ENCODE measurements at regions of chr2 and their contacts with region 1.

Region 1: DNA sequence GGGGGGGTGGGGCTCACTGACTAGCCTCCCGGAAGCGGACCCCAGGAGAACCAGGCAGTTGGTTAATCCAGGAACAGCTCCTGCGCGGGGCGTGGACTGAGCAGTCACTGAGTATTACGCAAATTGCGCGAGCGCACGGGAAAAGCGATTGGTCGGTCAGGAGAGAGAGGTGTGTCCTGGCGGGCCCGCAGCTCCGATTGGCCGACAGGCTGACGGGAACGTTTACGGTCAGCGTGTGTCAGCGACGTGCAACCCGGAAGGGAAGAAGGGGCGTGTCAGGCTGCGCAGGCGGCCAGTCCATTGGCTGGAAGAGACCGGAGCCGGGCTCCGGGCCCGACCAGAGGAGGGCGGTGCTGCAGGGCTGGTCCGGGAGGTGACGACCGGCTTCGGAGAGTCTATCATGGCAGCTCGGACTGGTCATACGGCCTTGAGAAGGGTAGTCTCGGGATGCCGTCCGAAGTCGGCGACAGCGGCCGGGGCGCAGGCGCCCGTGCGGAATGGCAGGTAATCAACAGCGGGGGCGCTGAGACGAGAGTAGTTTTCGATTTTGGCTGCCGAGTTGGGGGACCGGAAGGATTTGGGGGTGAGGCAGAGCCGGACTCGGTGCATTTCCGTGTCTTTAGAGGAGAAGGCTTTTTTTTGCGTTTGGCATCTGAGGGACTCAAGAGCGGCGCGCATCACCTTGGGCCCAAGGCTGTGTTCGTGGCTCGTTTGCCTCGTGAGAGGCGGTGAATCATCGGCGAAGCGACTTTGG is at the start of gene COQ10B:
- DNase-seq: peak; percentile 91
- ATAC-seq: peak; percentile 88
- H3K4me3 Mint-ChIP-seq: peak within 1 kb of the TSS; percentile 91
- H3K27ac Mint-ChIP-seq: peak within 1 kb of the TSS; percentile 94
- H3K4me1 Mint-ChIP-seq: peaks cover 45% of the 10 kb centered on the region
- H3K27me3 Mint-ChIP-seq: no peaks in the 10 kb centered on the region
- CTCF ChIP-seq: no peak
- total RNA-seq, gene COQ10B: 25.1 and 27.5 TPM in 2 replicates

Region 2: GRCh38 chr2:196639180-196640030 is 813.9 kb before region 1 on chr2 and contains the start of gene CCDC150:
- CTCF ChIA-PET with region 1: no interaction called
- POLR2A ChIA-PET with region 1: no interaction called
- intact Hi-C with region 1: loop called (anchors 1 kb)
- DNase-seq: peak; percentile 90
- ATAC-seq: peak; percentile 100
- H3K4me3 Mint-ChIP-seq: peak within 1 kb of the TSS; percentile 89
- H3K27ac Mint-ChIP-seq: peak within 1 kb of the TSS; percentile 53
- H3K4me1 Mint-ChIP-seq: peaks cover 14% of the 10 kb centered on the region
- H3K27me3 Mint-ChIP-seq: no peaks in the 10 kb centered on the region
- CTCF ChIP-seq: no peak
- total RNA-seq, gene CCDC150: 2.3 and 2.6 TPM in 2 replicates

Region 3: DNA sequence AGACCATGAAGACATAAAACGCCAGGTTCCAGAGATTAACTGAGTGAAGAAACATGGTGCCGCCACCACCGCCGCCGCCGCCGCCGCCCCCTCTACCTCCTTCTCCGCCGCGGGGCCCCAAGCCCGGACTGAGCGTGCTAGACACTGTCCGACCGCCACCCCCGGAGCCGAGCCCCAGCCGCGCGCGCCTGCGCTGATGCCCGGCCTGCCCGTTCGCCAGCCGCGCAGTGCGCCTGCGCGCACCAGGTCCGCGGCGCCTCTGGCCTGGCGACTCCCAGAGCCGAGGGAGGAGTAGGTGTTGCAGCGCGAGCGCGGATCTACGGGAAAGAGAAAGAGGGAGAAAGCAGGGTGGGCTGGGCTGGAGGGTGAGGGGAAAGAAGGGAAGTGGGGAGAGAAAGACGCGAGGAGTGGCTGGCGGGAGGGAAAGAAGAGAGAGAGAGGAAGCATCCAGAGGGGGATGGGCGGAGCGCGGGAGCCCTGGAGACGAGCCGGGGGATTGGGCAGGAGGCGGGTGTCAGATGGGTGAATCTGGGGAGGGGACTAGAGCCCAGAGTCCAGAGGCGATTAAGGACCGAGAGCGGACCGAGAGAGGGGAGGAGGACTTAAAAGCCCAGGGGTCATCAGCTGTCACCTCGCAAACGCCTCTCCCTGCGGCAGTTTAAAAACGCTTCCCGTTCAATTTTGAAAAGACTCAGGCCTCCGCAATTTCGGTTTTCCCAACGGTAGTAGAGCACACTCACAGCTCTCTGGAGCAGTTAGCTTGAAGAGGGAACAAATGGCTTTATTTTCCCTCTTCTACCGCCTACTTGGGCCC is 526.6 kb before region 1 on chr2 and contains the start of gene PGAP1:
- CTCF ChIA-PET with region 1: no interaction called
- POLR2A ChIA-PET with region 1: no interaction called
- intact Hi-C with region 1: loop called (anchors 1 kb)
- DNase-seq: peak; percentile 82
- ATAC-seq: peak; percentile 91
- H3K4me3 Mint-ChIP-seq: peak within 1 kb of the TSS; percentile 90
- H3K27ac Mint-ChIP-seq: peak within 1 kb of the TSS; percentile 86
- H3K4me1 Mint-ChIP-seq: peaks cover 21% of the 10 kb centered on the region
- H3K27me3 Mint-ChIP-seq: peaks cover 13% of the 10 kb centered on the region
- CTCF ChIP-seq: no peak
- total RNA-seq, gene PGAP1: 1.9 and 2.9 TPM in 2 replicates

Region 4: DNA sequence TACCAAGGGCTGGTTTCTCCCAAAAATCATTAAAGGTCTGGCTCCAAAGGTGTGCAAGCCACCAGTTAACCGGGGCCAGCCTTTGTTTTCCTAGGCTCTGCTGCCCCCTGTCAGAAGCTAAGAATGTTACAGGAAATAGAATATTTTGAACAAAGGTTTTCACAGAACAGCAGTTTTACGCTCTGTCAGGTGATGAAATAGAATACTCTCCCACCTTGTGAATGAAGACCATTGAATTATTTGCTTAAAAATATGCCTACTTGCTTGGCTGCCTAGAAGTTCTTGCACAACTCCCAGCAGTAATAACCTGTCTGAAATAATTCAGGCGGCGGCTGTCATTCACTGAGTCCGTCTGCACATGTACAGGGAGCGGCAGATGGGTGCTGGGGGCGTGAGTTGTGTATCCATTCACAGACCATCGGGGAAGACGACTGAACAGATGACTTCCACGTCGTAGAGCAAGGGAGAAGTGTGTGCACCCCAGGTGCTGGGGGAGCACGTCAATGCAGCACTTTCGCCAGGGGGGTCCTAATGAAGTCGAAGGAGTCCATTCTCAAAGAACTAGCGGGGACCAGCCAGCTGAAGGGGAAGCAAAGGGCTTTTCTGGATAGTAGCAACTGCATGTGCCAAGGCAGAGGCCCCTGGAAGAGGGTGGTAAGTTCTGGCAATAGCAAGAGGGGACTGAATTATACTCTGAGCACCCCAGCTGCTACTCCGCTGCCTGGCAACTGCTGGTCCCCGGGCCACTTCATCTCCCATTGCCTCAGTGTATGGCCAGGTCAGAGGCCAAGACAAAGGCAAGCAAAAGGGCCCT is 74.6 kb before region 1 on chr2:
- CTCF ChIA-PET with region 1: no interaction called
- POLR2A ChIA-PET with region 1: no interaction called
- intact Hi-C with region 1: no loop called
- DNase-seq: peak; percentile 29
- ATAC-seq: peak; percentile 66
- H3K4me3 Mint-ChIP-seq: no peak overlapping the region
- H3K27ac Mint-ChIP-seq: no peak overlapping the region
- H3K4me1 Mint-ChIP-seq: peaks cover 11% of the 10 kb centered on the region
- H3K27me3 Mint-ChIP-seq: no peaks in the 10 kb centered on the region
- CTCF ChIP-seq: peak; percentile 43

Region 5: DNA sequence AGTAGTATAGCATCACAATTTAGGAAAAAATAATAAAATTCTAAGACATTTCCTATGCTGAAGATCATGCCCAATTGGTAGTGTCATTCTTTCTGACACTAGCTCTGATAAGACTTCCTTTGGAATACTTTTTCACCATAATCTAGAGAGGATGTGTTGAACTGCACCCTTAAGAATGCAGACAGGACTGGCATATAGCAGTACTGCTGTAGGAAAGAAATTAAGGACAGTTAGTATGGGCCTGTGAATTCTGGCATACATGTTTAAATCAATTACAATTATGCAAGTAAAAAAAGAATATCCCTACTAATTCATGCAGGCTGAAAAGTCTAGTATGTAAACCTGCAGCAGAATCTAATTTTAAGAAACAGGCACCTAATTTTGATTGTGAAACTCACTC is 33.9 kb before region 1 on chr2:
- CTCF ChIA-PET with region 1: no interaction called
- POLR2A ChIA-PET with region 1: no interaction called
- intact Hi-C with region 1: loop called (anchors 1 kb)
- DNase-seq: no peak
- ATAC-seq: no peak
- H3K4me3 Mint-ChIP-seq: no peak overlapping the region
- H3K27ac Mint-ChIP-seq: no peak overlapping the region
- H3K4me1 Mint-ChIP-seq: peaks cover 10% of the 10 kb centered on the region
- H3K27me3 Mint-ChIP-seq: no peaks in the 10 kb centered on the region
- CTCF ChIP-seq: no peak

Region 6: DNA sequence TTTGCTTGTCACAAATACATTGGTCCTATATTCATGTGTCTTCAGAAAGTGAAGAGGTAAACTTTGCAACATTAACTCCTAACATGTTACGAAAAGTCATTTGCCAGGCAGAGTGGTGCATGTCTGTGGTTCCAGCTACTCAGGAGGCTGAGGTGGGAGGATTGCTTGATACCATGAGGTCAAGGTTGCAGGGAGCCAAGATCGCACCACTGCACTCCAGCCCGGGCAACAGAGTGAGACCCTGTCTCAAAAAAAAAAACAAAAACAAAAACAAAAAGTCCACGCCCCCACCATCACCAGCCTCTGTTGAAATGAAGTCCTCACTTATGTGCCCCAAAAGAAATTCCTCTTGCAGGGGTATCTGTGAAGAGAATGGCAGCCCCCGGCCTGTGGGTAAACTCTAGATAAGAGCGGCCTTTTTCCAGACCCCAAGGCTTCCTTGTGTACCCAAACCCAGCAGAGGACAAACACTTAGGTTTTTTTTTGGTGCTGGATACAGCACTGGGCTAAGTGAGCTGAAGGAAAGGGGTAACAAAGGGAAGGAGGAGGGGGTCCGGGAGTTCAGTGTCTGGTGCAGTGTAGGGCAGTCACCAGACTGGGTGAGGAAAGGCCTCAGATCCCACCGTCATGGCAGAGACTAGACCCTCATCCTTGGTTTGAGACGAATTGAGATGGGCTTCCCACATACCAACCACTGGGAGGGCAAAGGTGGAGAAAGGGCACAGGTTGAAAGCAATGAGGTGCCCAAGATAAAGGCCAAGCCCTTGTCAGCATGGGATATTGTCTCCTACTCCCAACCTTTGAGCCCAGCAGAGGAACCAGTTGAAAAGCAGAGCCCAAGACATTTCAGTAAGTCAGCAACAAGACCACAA is 27.1 kb after region 1 on chr2:
- CTCF ChIA-PET with region 1: no interaction called
- POLR2A ChIA-PET with region 1: interaction called, 6 read pairs
- intact Hi-C with region 1: loop called (anchors 2 kb)
- DNase-seq: no peak
- ATAC-seq: no peak
- H3K4me3 Mint-ChIP-seq: no peak overlapping the region
- H3K27ac Mint-ChIP-seq: no peak overlapping the region
- H3K4me1 Mint-ChIP-seq: no peaks in the 10 kb centered on the region
- H3K27me3 Mint-ChIP-seq: no peaks in the 10 kb centered on the region
- CTCF ChIP-seq: no peak

Region 7: GRCh38 chr2:197705121-197705911 is 252.0 kb after region 1 on chr2 and contains the start of gene MARS2:
- CTCF ChIA-PET with region 1: no interaction called
- POLR2A ChIA-PET with region 1: interaction called, 6 read pairs
- intact Hi-C with region 1: loop called (anchors 1 kb)
- DNase-seq: peak; percentile 89
- ATAC-seq: peak; percentile 92
- H3K4me3 Mint-ChIP-seq: peak within 1 kb of the TSS; percentile 89
- H3K27ac Mint-ChIP-seq: peak within 1 kb of the TSS; percentile 89
- H3K4me1 Mint-ChIP-seq: peaks cover 41% of the 10 kb centered on the region
- H3K27me3 Mint-ChIP-seq: peaks cover 14% of the 10 kb centered on the region
- CTCF ChIP-seq: no peak
- total RNA-seq, gene MARS2: 14.6 and 15.4 TPM in 2 replicates